MCF 10A (cell line): ENCODE measurements at regions of chr20 and their contacts with region 1.

Region 1: GRCh38 chr20:8853805-8854338 is 215.0 kb upstream of the PLCB4 start:
- DNase-seq: peak; percentile 79
- H3K4me3 Mint-ChIP-seq: no peak overlapping the region
- H3K27ac Mint-ChIP-seq: no peak overlapping the region
- H3K4me1 Mint-ChIP-seq: peaks cover 14% of the 10 kb centered on the region
- H3K27me3 Mint-ChIP-seq: no peaks in the 10 kb centered on the region
- CTCF ChIP-seq: peak; percentile 67

Region 2: GRCh38 chr20:8798505-8798904 is 55.4 kb before region 1 on chr20:
- CTCF ChIA-PET with region 1: interaction called, 24 read pairs
- POLR2A ChIA-PET with region 1: no interaction called
- intact Hi-C with region 1: loop called (anchors 5 kb)
- DNase-seq: no peak
- H3K4me3 Mint-ChIP-seq: no peak overlapping the region
- H3K27ac Mint-ChIP-seq: no peak overlapping the region
- H3K4me1 Mint-ChIP-seq: no peaks in the 10 kb centered on the region
- H3K27me3 Mint-ChIP-seq: peaks cover 39% of the 10 kb centered on the region
- CTCF ChIP-seq: no peak

Region 3: GRCh38 chr20:8867181-8867740 is 13.4 kb after region 1 on chr20:
- CTCF ChIA-PET with region 1: interaction called, 33 read pairs
- POLR2A ChIA-PET with region 1: no interaction called
- intact Hi-C with region 1: no loop called
- DNase-seq: no peak
- H3K4me3 Mint-ChIP-seq: no peak overlapping the region
- H3K27ac Mint-ChIP-seq: no peak overlapping the region
- H3K4me1 Mint-ChIP-seq: no peaks in the 10 kb centered on the region
- H3K27me3 Mint-ChIP-seq: no peaks in the 10 kb centered on the region
- CTCF ChIP-seq: no peak

Region 4: DNA sequence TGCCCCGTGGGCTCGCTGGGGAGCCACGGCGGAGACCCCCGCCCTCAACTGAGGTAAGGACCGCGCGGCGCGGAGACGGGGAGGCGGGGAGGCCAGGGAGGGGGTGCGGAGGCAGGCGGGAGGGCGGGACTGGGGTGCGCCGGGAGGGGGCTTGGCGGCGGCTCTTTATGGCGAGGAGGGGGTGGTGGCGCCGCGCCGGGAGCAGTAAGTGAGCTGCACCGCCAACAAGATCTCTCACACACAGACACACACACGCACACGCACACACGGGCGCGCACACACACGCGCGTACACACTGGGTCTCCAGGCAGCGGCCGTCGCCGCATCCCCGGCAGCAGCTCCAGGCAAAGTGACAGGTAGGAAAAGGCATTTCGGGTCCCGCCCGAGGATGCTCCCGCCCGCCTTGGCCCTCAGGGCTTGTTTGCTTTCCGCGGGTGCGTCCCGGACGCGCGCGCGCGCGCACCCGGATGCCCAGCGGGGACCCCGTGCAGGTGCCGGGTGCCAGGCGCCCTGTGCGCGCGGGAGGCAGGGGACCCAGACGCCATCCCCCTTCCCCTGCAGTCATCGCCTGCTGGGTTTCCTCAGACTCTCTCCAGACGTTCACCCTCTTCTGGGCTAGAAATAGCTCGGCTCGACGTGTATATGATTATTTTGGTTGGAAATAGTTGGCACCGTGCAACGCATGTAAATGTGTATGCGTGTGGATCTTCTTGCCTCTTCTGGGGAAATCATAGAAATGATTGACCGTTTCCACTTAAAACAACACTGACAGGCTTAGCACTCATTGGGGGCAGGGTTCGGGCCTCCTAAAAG is 215.2 kb after region 1 on chr20 and contains the start of gene PLCB4:
- CTCF ChIA-PET with region 1: interaction called, 7 read pairs
- POLR2A ChIA-PET with region 1: no interaction called
- intact Hi-C with region 1: loop called (anchors 10 kb)
- DNase-seq: peak; percentile 55
- H3K4me3 Mint-ChIP-seq: peak within 1 kb of the TSS; percentile 82
- H3K27ac Mint-ChIP-seq: no peak within 1 kb of the TSS
- H3K4me1 Mint-ChIP-seq: peaks cover 6% of the 10 kb centered on the region
- H3K27me3 Mint-ChIP-seq: no peaks in the 10 kb centered on the region
- CTCF ChIP-seq: no peak
- total RNA-seq, gene PLCB4: 0.22 and 0.91 TPM in 2 replicates

Region 5: DNA sequence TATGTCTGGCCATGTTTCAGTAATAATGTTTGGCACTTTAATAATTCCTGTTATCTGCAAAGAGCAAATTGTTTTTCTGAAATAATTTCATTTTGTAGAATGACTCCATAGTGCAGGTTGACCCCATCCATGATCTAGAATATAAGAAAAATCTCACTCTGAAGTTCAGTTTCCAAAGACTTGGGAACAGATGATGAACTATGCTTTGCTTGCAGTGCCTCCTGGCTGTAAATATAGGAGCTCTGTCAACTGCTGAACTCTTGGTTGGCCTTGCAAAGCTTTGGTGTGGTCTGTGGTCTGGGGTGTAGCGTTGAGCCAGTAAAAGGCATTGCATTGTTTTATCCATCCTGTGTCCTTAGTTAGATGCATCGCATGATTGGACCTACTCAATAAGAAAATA is 319.0 kb after region 1 on chr20:
- CTCF ChIA-PET with region 1: interaction called, 12 read pairs
- POLR2A ChIA-PET with region 1: no interaction called
- intact Hi-C with region 1: loop called (anchors 10 kb)
- DNase-seq: peak; percentile 18
- H3K4me3 Mint-ChIP-seq: no peak overlapping the region
- H3K27ac Mint-ChIP-seq: no peak overlapping the region
- H3K4me1 Mint-ChIP-seq: no peaks in the 10 kb centered on the region
- H3K27me3 Mint-ChIP-seq: no peaks in the 10 kb centered on the region
- CTCF ChIP-seq: no peak

Region 6: GRCh38 chr20:9353180-9353915 is 499.5 kb after region 1 on chr20:
- CTCF ChIA-PET with region 1: interaction called, 85 read pairs
- POLR2A ChIA-PET with region 1: no interaction called
- intact Hi-C with region 1: no loop called
- DNase-seq: no peak
- H3K4me3 Mint-ChIP-seq: no peak overlapping the region
- H3K27ac Mint-ChIP-seq: no peak overlapping the region
- H3K4me1 Mint-ChIP-seq: no peaks in the 10 kb centered on the region
- H3K27me3 Mint-ChIP-seq: no peaks in the 10 kb centered on the region
- CTCF ChIP-seq: no peak

Region 7: GRCh38 chr20:9392892-9393857 is 539.3 kb after region 1 on chr20:
- CTCF ChIA-PET with region 1: interaction called, 14 read pairs
- POLR2A ChIA-PET with region 1: no interaction called
- intact Hi-C with region 1: loop called (anchors 1 kb)
- DNase-seq: peak; percentile 76
- H3K4me3 Mint-ChIP-seq: no peak overlapping the region
- H3K27ac Mint-ChIP-seq: no peak overlapping the region
- H3K4me1 Mint-ChIP-seq: no peaks in the 10 kb centered on the region
- H3K27me3 Mint-ChIP-seq: no peaks in the 10 kb centered on the region
- CTCF ChIP-seq: peak; percentile 71